PC-3 (cell line): ENCODE measurements at regions of chr7 and their contacts with region 1.

Region 1: DNA sequence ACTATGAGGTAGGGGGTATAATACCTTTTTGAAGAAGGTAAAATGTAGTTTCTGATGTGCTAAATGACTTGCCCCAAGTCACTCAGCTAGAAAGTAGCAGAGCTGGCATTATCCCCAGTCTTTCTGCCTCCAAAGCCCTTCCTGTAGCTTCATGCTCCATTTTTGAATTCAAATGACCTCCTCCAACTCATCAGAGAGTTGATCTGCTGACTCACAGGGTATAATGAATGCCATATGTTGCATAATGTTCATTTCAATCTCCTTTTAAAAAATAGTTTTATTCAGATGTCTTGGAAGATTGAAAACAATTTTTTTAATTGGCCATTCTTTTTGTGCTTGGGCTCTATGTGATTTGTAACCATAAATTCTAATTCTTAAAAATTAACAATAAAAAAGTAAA is 272.8 kb upstream of the IMMP2L start:
- DNase-seq: peak; percentile 55
- ATAC-seq: peak; percentile 43
- H3K4me3 ChIP-seq: no peak overlapping the region
- H3K27ac ChIP-seq: no peak overlapping the region
- H3K4me1 ChIP-seq: peaks cover 10% of the 10 kb centered on the region
- H3K27me3 ChIP-seq: no peaks in the 10 kb centered on the region
- CTCF ChIP-seq: no peak

Region 2: DNA sequence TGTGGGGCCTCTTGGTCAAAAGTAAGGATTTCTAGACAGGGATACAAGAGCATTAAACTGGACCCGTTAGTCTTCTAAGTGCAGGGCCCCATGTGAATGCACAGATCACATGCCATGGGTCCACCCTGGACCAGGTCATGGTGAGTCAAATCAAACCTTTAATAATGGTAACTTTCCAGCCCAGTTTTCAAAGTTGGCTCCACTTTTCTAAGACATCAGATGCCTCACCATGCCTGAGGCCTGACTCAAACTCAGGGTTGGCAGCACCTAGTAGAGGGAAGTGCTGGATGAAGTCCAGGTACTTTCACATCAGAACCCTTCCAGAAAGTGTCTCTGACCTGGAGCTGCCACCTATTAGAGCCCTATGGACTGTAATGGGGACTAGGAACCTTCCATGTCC is 1293.0 kb after region 1 on chr7:
- CTCF ChIA-PET with region 1: no interaction called
- POLR2A ChIA-PET with region 1: interaction called, 10 read pairs
- intact Hi-C with region 1: no loop called
- DNase-seq: peak; percentile 60
- ATAC-seq: peak; percentile 54; the same call in 1 of the 2 replicates
- H3K4me3 ChIP-seq: no peak overlapping the region
- H3K27ac ChIP-seq: no peak overlapping the region
- H3K4me1 ChIP-seq: no peaks in the 10 kb centered on the region
- H3K27me3 ChIP-seq: no peaks in the 10 kb centered on the region; the same call in 1 of the 2 replicates
- CTCF ChIP-seq: no peak